ENCODE measurements at regions of chr18 and their contacts with region 1.

Region 1: GRCh38 chr18:9055185-9055584 is 47.3 kb upstream of the NDUFV2 start:
- DNase-seq: no peak
- ATAC-seq: peak; percentile 77 to 84
- H3K4me3 ChIP-seq: no peak overlapping the region
- H3K27ac ChIP-seq: no peak overlapping the region
- H3K4me1 ChIP-seq: peaks cover 0 to 8% of the 10 kb centered on the region in 2 donors
- H3K27me3 ChIP-seq: no peaks in the 10 kb centered on the region
- CTCF ChIP-seq: no peak
- POLR2A ChIP-seq: no peak

Region 2: DNA sequence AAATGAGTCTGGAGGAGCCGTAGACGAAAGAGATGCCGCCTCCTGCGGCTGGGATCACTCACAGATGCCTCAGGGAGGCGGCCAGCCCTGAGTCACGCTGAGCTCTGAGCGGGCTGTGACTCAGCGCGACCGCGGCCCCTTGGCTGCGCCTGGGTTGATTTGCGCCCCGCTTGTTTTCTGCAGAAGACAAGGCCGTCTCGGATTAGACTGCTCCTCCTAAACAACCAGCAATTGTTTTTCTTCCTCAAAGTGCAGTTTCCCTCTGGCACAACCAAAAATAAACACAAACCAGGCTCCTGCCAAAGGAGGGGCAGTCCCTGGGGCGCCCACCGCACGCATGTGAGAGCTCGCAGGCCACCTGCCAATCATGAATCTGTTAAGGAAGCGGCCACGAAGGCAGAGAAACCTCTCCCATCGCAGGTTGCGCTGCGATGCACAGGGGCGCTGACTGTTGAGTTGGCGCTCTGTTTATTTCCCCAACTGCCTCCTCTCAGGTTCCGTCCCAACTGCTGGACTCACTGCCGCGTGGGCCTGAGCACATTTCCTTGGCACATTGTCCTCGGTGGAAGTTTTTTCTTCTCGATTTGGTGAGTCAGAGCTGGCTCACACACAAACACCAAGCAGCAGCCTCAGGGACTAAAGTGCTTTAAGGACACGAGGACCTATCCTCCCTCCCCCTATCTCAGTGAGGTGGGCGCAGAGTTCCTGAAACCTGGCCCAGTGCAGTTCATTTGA is 37.8 kb before region 1 on chr18:
- in situ Hi-C with region 1: no loop called
- intact Hi-C with region 1: loop called (anchors 5 kb)
- DNase-seq: peak; percentile 67 to 81
- ATAC-seq: peak; percentile 87 to 92
- H3K4me3 ChIP-seq: peak overlapping the region; percentile 40 to 55 (median 44)
- H3K27ac ChIP-seq: peak overlapping the region; percentile 78 to 92 (median 84)
- H3K4me1 ChIP-seq: peaks cover 8 to 18% of the 10 kb centered on the region in 2 donors
- H3K27me3 ChIP-seq: no peaks in the 10 kb centered on the region
- CTCF ChIP-seq: peak in 1 of 5 experiments; percentile 17
- POLR2A ChIP-seq: no peak

Region 3: GRCh38 chr18:9082711-9083510 is 27.7 kb after region 1 on chr18:
- in situ Hi-C with region 1: no loop called
- intact Hi-C with region 1: no loop called
- DNase-seq: no peak
- ATAC-seq: no peak
- H3K4me3 ChIP-seq: no peak overlapping the region
- H3K27ac ChIP-seq: no peak overlapping the region
- H3K4me1 ChIP-seq: no peaks in the 10 kb centered on the region
- H3K27me3 ChIP-seq: no peaks in the 10 kb centered on the region
- CTCF ChIP-seq: no peak
- POLR2A ChIP-seq: no peak

Region 4: DNA sequence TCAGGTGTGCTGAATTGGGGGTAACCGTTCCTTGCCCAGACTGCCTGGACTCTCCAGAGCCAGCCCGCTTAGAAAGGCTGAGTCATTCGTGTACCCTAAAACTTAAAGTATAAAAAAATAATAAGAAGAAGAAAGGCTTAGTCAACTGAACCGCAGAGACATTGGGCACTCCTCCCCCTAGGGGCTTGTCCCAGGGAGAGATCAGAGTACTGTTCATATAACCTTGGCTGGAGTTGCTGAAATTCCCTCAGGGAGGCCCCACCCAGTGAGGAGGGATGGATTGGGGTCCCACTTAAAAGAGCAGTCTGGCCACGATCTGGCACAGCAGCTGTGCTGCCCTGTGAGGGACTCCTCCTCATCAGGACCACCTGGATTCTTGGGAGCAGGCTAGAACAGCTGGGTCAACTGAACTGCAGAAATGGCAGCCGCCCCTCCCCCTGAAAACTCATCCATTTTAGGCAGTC is 118.6 kb after region 1 on chr18:
- in situ Hi-C with region 1: no loop called
- intact Hi-C with region 1: no loop called
- DNase-seq: no peak
- ATAC-seq: no peak
- H3K4me3 ChIP-seq: no peak overlapping the region
- H3K27ac ChIP-seq: peak overlapping the region in 3 of 4 donors; percentile 12 to 48 (median 16)
- H3K4me1 ChIP-seq: peaks cover 51 to 54% of the 10 kb centered on the region in 2 donors
- H3K27me3 ChIP-seq: no peaks in the 10 kb centered on the region
- CTCF ChIP-seq: no peak
- POLR2A ChIP-seq: no peak